Activated B cell treated with CpG ODN at 0.5 μM for 24 hours (primary cell): ENCODE measurements at regions of chr14 and their contacts with region 1.

Region 1: GRCh38 chr14:51157012-51157411 is 62.1 kb upstream of the TRIM9 start:
- DNase-seq: no peak
- ATAC-seq: peak; percentile 54
- H3K4me3 Mint-ChIP-seq: no peak overlapping the region
- H3K27ac Mint-ChIP-seq: no peak overlapping the region
- H3K4me1 Mint-ChIP-seq: peaks cover 16% of the 10 kb centered on the region
- H3K27me3 Mint-ChIP-seq: no peaks in the 10 kb centered on the region
- CTCF ChIP-seq: no peak

Region 2: GRCh38 chr14:50954811-50955372 is 202.1 kb before region 1 on chr14:
- CTCF ChIA-PET with region 1: no interaction called
- POLR2A ChIA-PET with region 1: no interaction called
- intact Hi-C with region 1: loop called (anchors 2 kb)
- DNase-seq: no peak
- ATAC-seq: peak; percentile 31
- H3K4me3 Mint-ChIP-seq: no peak overlapping the region
- H3K27ac Mint-ChIP-seq: no peak overlapping the region
- H3K4me1 Mint-ChIP-seq: no peaks in the 10 kb centered on the region
- H3K27me3 Mint-ChIP-seq: no peaks in the 10 kb centered on the region
- CTCF ChIP-seq: no peak

Region 3: GRCh38 chr14:51116682-51117081 is 40.3 kb before region 1 on chr14:
- CTCF ChIA-PET with region 1: no interaction called
- POLR2A ChIA-PET with region 1: no interaction called
- intact Hi-C with region 1: no loop called
- DNase-seq: no peak
- ATAC-seq: no peak
- H3K4me3 Mint-ChIP-seq: no peak overlapping the region
- H3K27ac Mint-ChIP-seq: no peak overlapping the region
- H3K4me1 Mint-ChIP-seq: no peaks in the 10 kb centered on the region
- H3K27me3 Mint-ChIP-seq: no peaks in the 10 kb centered on the region
- CTCF ChIP-seq: no peak

Region 4: DNA sequence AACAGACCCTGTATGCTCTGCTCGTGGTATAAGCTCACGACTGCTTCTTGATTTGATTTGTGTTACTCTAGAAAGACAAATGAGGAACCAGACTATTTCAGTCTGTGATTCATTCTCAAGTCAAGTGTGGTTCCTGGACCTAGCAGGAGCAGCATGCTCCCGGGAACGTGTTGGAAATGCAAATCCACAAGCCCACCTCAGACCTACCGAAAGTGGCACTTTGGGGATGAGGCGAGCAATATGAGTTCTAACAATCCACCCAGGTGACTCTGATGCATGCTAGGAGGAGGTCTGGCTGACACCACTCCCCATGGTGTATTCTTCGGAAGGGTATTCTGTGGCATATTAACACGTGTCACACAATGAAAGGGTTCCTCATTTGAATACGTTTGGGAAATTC is 23.6 kb after region 1 on chr14:
- CTCF ChIA-PET with region 1: interaction called, 3 read pairs
- POLR2A ChIA-PET with region 1: no interaction called
- intact Hi-C with region 1: loop called (anchors 1 kb)
- DNase-seq: peak; percentile 20
- ATAC-seq: peak; percentile 88
- H3K4me3 Mint-ChIP-seq: peak overlapping the region; percentile 51
- H3K27ac Mint-ChIP-seq: peak overlapping the region; percentile 50
- H3K4me1 Mint-ChIP-seq: peaks cover 33% of the 10 kb centered on the region
- H3K27me3 Mint-ChIP-seq: no peaks in the 10 kb centered on the region
- CTCF ChIP-seq: no peak

Region 5: GRCh38 chr14:51195286-51195685 is 38.3 kb after region 1 on chr14:
- CTCF ChIA-PET with region 1: no interaction called
- POLR2A ChIA-PET with region 1: no interaction called
- intact Hi-C with region 1: no loop called
- DNase-seq: no peak
- ATAC-seq: no peak
- H3K4me3 Mint-ChIP-seq: no peak overlapping the region
- H3K27ac Mint-ChIP-seq: no peak overlapping the region
- H3K4me1 Mint-ChIP-seq: no peaks in the 10 kb centered on the region
- H3K27me3 Mint-ChIP-seq: no peaks in the 10 kb centered on the region
- CTCF ChIP-seq: no peak

Region 6: DNA sequence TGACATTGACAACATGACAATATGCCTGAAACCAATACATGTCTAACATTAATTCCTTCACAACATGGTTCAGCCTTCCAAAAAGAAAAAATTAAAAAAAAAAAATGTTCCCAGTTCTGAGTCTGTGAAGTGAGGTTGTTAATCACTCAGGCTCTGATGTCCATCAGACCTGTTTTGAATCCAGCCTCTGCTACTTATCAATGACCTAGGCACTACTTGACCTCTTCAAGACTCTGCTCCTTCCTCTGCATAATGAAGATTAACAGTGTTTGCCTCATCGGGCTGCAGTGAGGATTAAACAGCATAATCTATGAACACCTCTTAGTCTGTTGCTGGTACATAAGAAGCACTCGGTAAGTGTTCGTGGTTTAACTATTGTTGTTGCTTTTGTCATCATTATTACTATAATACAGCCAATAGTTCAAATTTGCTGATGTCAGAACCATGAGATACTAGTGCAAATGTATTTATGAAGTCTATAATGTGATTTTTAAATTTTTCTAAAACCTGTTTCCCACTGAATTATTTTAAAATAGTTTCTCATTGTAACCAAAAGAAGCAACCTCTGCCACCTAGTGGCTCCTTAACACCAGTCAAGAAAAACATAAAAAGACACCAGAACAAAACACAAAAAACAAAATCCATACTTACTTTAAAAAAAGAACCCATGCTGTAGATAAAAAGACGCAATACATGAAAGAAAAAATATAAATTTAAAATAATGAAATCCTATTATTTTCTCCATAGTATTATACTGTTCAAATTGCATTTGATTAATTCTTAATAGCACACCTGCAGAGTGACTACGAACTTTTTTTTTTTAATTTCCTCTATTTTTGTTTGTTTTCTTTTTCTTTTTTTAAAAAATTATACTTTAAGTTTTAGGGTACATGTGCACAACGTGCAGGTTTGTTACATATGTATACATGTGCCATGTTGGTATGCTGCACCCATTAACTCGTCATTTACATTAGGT is 62.7 kb after region 1 on chr14:
- CTCF ChIA-PET with region 1: interaction called, 20 read pairs
- POLR2A ChIA-PET with region 1: no interaction called
- intact Hi-C with region 1: loop called (anchors 1 kb)
- DNase-seq: no peak
- ATAC-seq: no peak
- H3K4me3 Mint-ChIP-seq: no peak overlapping the region
- H3K27ac Mint-ChIP-seq: no peak overlapping the region
- H3K4me1 Mint-ChIP-seq: no peaks in the 10 kb centered on the region
- H3K27me3 Mint-ChIP-seq: peaks cover 3% of the 10 kb centered on the region
- CTCF ChIP-seq: peak; percentile 35

Region 7: DNA sequence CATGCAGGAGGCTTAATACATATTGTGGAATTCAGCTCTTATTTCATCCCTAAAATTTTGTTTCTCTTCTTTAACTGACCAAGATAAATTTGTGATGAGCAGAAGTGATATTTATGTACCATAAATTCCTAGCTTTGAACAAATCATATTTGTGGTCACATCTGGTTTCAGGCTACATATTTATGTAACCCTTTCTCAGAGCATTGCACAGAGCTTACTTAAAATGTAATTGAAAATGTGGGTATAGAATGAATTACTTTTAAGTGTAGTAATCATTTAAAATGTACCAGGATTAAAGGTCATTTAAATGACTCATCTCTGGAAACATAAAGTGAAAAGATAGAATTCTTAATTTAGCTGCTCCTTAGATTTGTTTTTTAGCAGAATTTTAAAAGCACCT is 364.8 kb after region 1 on chr14:
- CTCF ChIA-PET with region 1: no interaction called
- POLR2A ChIA-PET with region 1: no interaction called
- intact Hi-C with region 1: no loop called
- DNase-seq: no peak
- ATAC-seq: no peak
- H3K4me3 Mint-ChIP-seq: no peak overlapping the region
- H3K27ac Mint-ChIP-seq: no peak overlapping the region
- H3K4me1 Mint-ChIP-seq: no peaks in the 10 kb centered on the region
- H3K27me3 Mint-ChIP-seq: no peaks in the 10 kb centered on the region
- CTCF ChIP-seq: no peak

Region 8: GRCh38 chr14:51651388-51652167 is 494.6 kb after region 1 on chr14 and contains the start of gene FRMD6:
- CTCF ChIA-PET with region 1: interaction called, 3 read pairs
- POLR2A ChIA-PET with region 1: no interaction called
- intact Hi-C with region 1: loop called (anchors 5 kb)
- DNase-seq: peak; percentile 71
- ATAC-seq: peak; percentile 80
- H3K4me3 Mint-ChIP-seq: peak within 1 kb of the TSS; percentile 82
- H3K27ac Mint-ChIP-seq: peak within 1 kb of the TSS; percentile 35
- H3K4me1 Mint-ChIP-seq: peaks cover 8% of the 10 kb centered on the region
- H3K27me3 Mint-ChIP-seq: peaks cover 30% of the 10 kb centered on the region
- CTCF ChIP-seq: no peak
- total RNA-seq, gene FRMD6: 0.32 and 0.33 TPM in 2 replicates